ENCODE measurements at regions of chr11 and their contacts with region 1.

Region 1: GRCh38 chr11:130631119-130631518 is 182.7 kb downstream of the ADAMTS15 start:
- DNase-seq: peak; percentile 98
- ATAC-seq: peak; percentile 56
- H3K4me3 ChIP-seq: no peak overlapping the region
- H3K27ac ChIP-seq: peak overlapping the region; percentile 97
- H3K4me1 ChIP-seq: peaks cover 67% of the 10 kb centered on the region
- H3K27me3 ChIP-seq: no peaks in the 10 kb centered on the region
- CTCF ChIP-seq: no peak

Region 2: GRCh38 chr11:130448416-130449309 is 182.5 kb before region 1 on chr11 and contains the start of gene ADAMTS15:
- CTCF ChIA-PET with region 1: no interaction called
- POLR2A ChIA-PET with region 1: interaction called, 10 read pairs
- intact Hi-C with region 1: loop called (anchors 1 kb)
- DNase-seq: peak; percentile 97
- ATAC-seq: peak; percentile 91
- H3K4me3 ChIP-seq: peak within 1 kb of the TSS; percentile 94
- H3K27ac ChIP-seq: peak within 1 kb of the TSS; percentile 52
- H3K4me1 ChIP-seq: peaks cover 34% of the 10 kb centered on the region
- H3K27me3 ChIP-seq: no peaks in the 10 kb centered on the region
- CTCF ChIP-seq: no peak
- total RNA-seq, gene ADAMTS15: 16.8 and 21.7 TPM in 2 replicates

Region 3: DNA sequence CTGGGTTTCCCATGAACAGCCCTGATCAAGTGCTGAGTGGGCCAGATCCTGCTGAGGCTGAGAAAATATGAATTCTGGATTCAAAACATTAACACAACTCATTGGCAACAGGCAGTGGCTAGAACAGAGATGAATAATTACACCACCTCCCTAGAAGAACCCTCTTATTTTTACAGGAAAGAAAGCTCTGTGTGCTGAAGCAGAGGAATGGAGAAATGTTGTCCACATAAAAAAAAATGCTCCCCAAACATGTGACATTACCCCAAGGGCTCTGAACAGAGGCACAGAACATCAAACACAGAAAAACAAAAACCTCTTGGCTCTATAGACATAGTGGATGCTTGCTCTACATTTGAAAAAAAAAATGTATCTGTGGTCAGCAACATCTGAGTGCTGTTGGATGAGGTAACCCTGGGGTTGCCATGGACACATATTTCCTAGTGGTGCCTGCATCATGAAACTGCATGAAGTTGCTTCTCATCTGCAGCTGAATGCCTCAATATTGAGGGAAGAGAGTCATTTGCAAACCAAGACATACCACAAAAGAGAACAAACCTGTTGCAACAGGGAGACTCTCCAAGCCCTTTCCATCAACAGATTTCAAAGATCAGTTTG is 186.3 kb after region 1 on chr11:
- CTCF ChIA-PET with region 1: no interaction called
- POLR2A ChIA-PET with region 1: no interaction called
- intact Hi-C with region 1: no loop called
- DNase-seq: no peak
- ATAC-seq: no peak
- H3K4me3 ChIP-seq: no peak overlapping the region
- H3K27ac ChIP-seq: no peak overlapping the region
- H3K4me1 ChIP-seq: no peaks in the 10 kb centered on the region
- H3K27me3 ChIP-seq: no peaks in the 10 kb centered on the region
- CTCF ChIP-seq: no peak